ENCODE measurements at regions of chr4 and their contacts with region 1.

Region 1: DNA sequence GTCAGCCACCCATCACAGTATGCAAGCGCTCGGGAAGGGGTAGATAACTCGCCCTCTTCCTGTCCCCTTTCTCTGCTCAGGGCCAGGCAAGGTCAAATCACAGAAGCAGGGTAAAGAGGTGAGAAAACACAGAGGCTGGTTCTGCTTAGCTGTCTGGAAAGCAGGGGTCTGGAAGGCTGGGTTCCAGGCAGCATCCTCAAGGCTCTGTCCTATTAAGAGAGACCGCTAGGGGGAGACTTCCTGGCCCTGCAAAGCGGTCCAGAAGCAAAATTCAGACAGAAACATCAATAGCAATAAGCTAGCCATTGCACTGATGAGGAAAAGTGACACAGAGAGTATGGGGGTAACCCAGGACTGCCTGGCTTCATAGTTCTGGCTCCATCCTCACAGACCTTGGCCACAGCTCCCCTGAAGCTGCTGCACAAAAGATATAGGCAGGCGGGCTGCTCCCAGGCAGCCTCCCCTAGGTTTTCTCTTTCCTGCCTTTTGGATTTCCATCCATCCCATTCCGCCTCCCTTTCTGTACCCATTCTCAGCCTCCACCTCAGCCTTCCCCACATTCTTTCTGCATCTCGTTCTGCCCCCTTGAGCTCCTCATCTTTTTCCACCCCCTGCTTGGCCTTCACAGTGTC is 308.5 kb downstream of the EVC2 start:
- DNase-seq: no peak

Region 2: GRCh38 chr4:5220028-5220427 is 179.9 kb before region 1 on chr4:
- intact Hi-C with region 1: no loop called
- DNase-seq: no peak

Region 3: DNA sequence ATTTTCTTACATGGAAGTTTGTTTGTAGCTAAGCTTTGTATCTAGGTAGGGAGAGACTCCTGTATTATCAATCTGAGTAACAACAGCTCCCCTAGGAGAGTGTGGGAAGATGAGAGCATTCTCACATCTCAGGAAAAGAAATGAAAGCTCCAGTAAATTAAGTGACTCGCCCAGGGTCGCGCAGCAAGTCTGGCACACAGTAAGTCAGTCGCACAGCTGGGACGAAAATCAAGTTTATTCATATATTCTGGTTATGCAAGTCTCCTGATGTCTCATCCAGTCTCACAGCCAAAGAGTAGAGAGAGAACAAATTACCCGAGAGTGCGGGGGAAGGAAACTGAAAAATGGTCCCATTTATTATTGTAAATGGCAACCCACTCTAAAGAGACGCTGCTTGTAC is 132.5 kb before region 1 on chr4:
- intact Hi-C with region 1: no loop called
- DNase-seq: no peak

Region 4: GRCh38 chr4:5791654-5792053 is 391.7 kb after region 1 on chr4:
- intact Hi-C with region 1: loop called (anchors 5 kb)
- DNase-seq: peak; percentile 35

Measured in cardiac septum (tissue), 1 donor.